ENCODE measurements at regions of chr12 and their contacts with region 1.

Region 1: GRCh38 chr12:48814262-48815125 is 3.8 kb upstream of the CACNB3 start:
- DNase-seq: peak; percentile 73
- H3K4me3 ChIP-seq: peak overlapping the region; percentile 77 to 92 (median 92)
- H3K27ac ChIP-seq: peak overlapping the region; percentile 16
- H3K4me1 ChIP-seq: peaks cover 28% of the 10 kb centered on the region
- H3K27me3 ChIP-seq: no peaks in the 10 kb centered on the region
- CTCF ChIP-seq: peak; percentile 95 to 98

Region 2: GRCh38 chr12:48773686-48774085 is 40.8 kb before region 1 on chr12:
- CTCF ChIA-PET with region 1: no interaction called
- dilution Hi-C with region 1: loop called (anchors 5 kb)
- in situ Hi-C with region 1: no loop called
- intact Hi-C with region 1: no loop called
- DNase-seq: no peak
- H3K4me3 ChIP-seq: no peak overlapping the region
- H3K27ac ChIP-seq: no peak overlapping the region
- H3K4me1 ChIP-seq: no peaks in the 10 kb centered on the region
- H3K27me3 ChIP-seq: no peaks in the 10 kb centered on the region
- CTCF ChIP-seq: no peak

Region 3: DNA sequence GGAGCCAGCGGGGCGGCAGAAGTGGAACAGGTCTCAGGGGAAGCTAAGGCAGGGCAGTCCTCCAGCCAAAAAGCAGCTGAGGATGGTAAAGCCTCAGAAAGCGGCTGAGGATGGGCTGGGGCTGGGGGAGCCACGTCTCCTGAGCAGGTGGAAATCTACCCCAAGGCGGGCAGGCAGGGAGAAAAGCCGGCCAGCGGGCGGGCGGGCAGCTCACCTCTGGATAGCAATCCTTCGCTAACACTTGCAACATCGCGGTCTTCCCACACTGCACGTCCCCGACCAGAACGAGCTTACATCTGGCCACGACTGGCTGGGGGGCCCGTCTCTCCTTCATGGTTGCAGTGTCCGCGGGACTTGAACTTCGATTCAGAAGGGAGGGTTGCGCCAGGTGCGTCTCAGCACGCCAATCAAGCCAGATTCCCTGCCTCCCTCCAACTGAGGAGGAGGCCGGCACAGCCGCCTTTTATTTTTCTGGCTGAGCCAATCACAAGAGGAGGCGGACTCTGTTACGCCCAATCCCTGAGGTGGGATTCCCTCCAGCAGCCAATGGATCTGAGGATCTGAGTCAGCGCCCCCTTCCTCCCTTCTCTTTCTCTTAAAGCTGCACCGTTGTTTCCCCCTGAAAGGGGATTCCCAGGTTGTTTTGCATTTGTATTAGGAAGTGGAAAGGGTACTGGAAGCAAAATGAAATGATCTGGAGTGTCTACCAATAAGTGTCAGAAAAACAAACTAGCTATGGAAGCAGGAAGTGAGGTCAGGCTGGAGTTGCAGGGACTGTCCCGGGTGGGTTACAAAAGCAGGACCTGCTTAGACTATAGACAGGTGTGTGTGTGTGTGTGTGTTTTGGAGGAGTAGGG is 51.2 kb after region 1 on chr12 and contains the start of gene RND1:
- CTCF ChIA-PET with region 1: no interaction called
- dilution Hi-C with region 1: loop called (anchors 5 kb)
- in situ Hi-C with region 1: no loop called
- intact Hi-C with region 1: no loop called
- DNase-seq: peak; percentile 91
- H3K4me3 ChIP-seq: peak within 1 kb of the TSS; percentile 54 to 73 (median 56)
- H3K27ac ChIP-seq: peak within 1 kb of the TSS; percentile 14
- H3K4me1 ChIP-seq: peaks cover 13% of the 10 kb centered on the region
- H3K27me3 ChIP-seq: no peaks in the 10 kb centered on the region
- CTCF ChIP-seq: peak in 1 of 2 donors; percentile 8
- total RNA-seq, gene RND1: 0.17 to 0.68 TPM

Region 4: GRCh38 chr12:49451468-49452259 is 637.2 kb after region 1 on chr12:
- CTCF ChIA-PET with region 1: no interaction called
- dilution Hi-C with region 1: no loop called
- in situ Hi-C with region 1: no loop called
- intact Hi-C with region 1: no loop called
- DNase-seq: no peak
- H3K4me3 ChIP-seq: no peak overlapping the region
- H3K27ac ChIP-seq: no peak overlapping the region
- H3K4me1 ChIP-seq: no peaks in the 10 kb centered on the region
- H3K27me3 ChIP-seq: no peaks in the 10 kb centered on the region
- CTCF ChIP-seq: no peak